Cardiac septum (tissue), 1 donor: ENCODE measurements at regions of chr3 and their contacts with region 1.

Region 1: GRCh38 chr3:25648107-25648535 is 16.6 kb downstream of the TOP2B start:
- DNase-seq: peak; percentile 73

Region 2: GRCh38 chr3:25856902-25857518 is 208.9 kb after region 1 on chr3:
- intact Hi-C with region 1: loop called (anchors 1 kb)
- DNase-seq: no peak